ENCODE measurements at regions of chr2 and their contacts with region 1.

Region 1: GRCh38 chr2:45014016-45014702 is 4.9 kb upstream of the SIX2 start:
- DNase-seq: peak; percentile 82 to 90
- ATAC-seq: peak; percentile 63 to 74 (median 70)
- H3K4me3 ChIP-seq: peak overlapping the region; percentile 73
- H3K27ac ChIP-seq: peak overlapping the region; percentile 88
- H3K4me1 ChIP-seq: peaks cover 18% of the 10 kb centered on the region
- H3K27me3 ChIP-seq: no peaks in the 10 kb centered on the region
- CTCF ChIP-seq: peak; percentile 84

Region 2: DNA sequence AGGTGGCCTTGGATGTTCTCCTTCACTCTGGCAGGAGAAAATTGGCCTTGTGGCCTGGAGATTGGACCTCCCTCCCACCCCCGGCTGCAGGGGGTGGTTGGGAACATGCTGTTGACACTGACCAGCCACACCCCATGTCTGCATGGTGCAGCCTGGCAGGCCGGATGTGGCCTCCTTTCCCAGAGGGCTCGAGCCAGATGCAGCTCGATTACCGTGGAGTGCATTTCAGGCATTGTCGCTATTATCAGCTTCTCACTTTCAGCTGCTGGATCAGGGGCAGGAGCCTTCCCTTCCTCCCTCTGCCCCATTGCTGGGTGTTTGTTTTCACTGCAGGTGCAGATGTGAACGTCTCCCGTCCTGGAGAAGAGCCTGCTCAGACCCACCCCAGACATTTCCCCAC is 206.1 kb after region 1 on chr2:
- intact Hi-C with region 1: loop called in 1 of 2 experiments (anchors 10 kb)
- DNase-seq: peak; percentile 38 to 85
- ATAC-seq: peak; percentile 90 to 99 (median 96)
- H3K4me3 ChIP-seq: no peak overlapping the region
- H3K27ac ChIP-seq: no peak overlapping the region
- H3K4me1 ChIP-seq: peaks cover 10% of the 10 kb centered on the region
- H3K27me3 ChIP-seq: no peaks in the 10 kb centered on the region
- CTCF ChIP-seq: no peak

Region 3: DNA sequence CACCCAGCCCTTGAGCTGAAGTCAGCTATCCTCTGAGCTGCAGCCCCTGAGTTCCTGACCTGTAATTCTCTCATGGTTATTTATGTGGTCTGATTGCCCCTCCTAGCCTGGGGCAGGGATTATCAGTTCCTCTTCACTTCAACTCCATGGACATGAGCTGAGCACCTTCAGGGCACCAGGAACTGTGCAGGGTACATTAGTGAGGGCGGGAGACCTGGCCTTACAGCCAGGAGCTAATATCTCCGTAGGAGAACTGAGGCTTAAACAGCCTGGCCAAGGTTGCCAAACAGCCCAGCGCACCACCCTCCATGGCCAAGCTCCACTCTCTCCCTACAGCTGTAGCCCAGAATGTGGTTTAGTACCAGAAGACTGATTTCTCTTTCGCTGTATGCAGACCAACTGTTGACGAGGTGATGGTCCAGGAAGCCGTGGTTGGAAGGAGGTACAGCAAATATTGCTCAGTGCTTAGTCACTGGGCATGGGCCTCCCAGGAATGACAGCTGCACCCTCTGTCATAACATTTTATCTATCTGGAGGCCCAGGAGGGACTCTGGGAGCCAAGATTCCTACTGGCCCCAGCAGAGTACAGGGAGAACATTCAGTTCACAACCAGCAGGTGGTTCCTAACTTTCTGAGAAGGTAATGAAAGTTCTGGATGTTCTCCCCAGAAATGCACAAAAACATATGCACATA is 223.8 kb after region 1 on chr2:
- intact Hi-C with region 1: loop called in 1 of 2 experiments (anchors 5 kb)
- DNase-seq: peak; percentile 77 to 89
- ATAC-seq: peak; percentile 87 to 93 (median 89)
- H3K4me3 ChIP-seq: peak overlapping the region; percentile 42
- H3K27ac ChIP-seq: peak overlapping the region; percentile 97
- H3K4me1 ChIP-seq: peaks cover 42% of the 10 kb centered on the region
- H3K27me3 ChIP-seq: no peaks in the 10 kb centered on the region
- CTCF ChIP-seq: peak; percentile 52